ENCODE measurements at regions of chr18 and their contacts with region 1.

Region 1: GRCh38 chr18:1544016-1544415 is 639.3 kb downstream of the ADCYAP1 start:
- DNase-seq: no peak
- ATAC-seq: no peak
- H3K4me3 ChIP-seq: no peak overlapping the region
- H3K4me3 Mint-ChIP-seq: no peak overlapping the region
- H3K27ac ChIP-seq: no peak overlapping the region
- H3K27ac Mint-ChIP-seq: no peak overlapping the region
- H3K4me1 ChIP-seq: no peaks in the 10 kb centered on the region
- H3K4me1 Mint-ChIP-seq: no peaks in the 10 kb centered on the region
- H3K27me3 ChIP-seq: no peaks in the 10 kb centered on the region
- H3K27me3 Mint-ChIP-seq: no peaks in the 10 kb centered on the region
- CTCF ChIP-seq: no peak

Region 2: GRCh38 chr18:1604751-1605150 is 60.7 kb after region 1 on chr18:
- CTCF ChIA-PET with region 1: no interaction called
- POLR2A ChIA-PET with region 1: no interaction called
- intact Hi-C with region 1: loop called in 1 of 2 experiments (anchors 10 kb)
- DNase-seq: no peak
- ATAC-seq: no peak
- H3K4me3 ChIP-seq: no peak overlapping the region
- H3K4me3 Mint-ChIP-seq: no peak overlapping the region
- H3K27ac ChIP-seq: no peak overlapping the region
- H3K27ac Mint-ChIP-seq: no peak overlapping the region
- H3K4me1 ChIP-seq: no peaks in the 10 kb centered on the region
- H3K4me1 Mint-ChIP-seq: no peaks in the 10 kb centered on the region
- H3K27me3 ChIP-seq: no peaks in the 10 kb centered on the region
- H3K27me3 Mint-ChIP-seq: no peaks in the 10 kb centered on the region
- CTCF ChIP-seq: no peak